Sigmoid colon (tissue), 7 donors: ENCODE measurements at regions of chr7 and their contacts with region 1.

Region 1: DNA sequence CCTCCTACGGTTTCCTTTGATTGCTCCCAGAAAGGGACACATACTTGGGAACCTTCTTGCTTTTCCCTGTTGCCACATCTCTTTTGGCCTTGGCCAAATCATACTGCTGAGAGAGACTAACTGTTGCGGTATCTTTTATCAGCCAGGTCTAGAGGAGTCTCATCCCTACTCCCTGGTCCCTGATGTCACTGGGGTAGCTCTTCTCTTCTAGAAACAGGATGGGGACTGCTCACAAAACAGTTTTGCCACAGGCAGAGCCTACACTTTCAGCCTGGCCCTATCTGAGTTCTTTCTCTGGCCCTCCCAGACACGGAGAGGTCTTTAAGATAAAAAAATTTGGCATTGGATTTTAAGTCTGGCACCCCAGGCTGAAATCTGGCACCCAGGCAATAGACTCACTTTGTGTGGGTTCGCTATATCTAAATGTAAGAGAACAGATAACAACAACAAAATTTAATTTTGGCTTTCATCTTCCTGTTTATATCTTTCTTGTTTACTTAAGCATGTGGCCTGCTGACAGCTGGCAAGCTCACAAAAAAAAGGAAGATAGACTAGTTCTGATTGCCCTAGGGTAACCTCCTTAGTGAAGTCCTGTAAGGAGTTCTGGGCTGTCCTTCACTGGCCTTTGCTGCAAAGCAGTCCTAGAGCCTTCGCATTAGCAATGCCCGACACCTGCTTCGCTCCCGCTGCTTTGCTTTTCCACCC is 228.3 kb upstream of the NPVF start:
- DNase-seq: peak; percentile 68
- H3K4me3 ChIP-seq: no peak overlapping the region
- H3K27ac ChIP-seq: peak overlapping the region in 3 of 4 donors; percentile 50 to 61 (median 56)
- H3K4me1 ChIP-seq: peaks cover 0 to 29% (median 15%) of the 10 kb centered on the region in 4 donors
- H3K27me3 ChIP-seq: no peaks in the 10 kb centered on the region
- CTCF ChIP-seq: no peak
- EP300 ChIP-seq: peak in 1 of 4 donors; percentile 9
- POLR2A ChIP-seq: no peak

Region 2: DNA sequence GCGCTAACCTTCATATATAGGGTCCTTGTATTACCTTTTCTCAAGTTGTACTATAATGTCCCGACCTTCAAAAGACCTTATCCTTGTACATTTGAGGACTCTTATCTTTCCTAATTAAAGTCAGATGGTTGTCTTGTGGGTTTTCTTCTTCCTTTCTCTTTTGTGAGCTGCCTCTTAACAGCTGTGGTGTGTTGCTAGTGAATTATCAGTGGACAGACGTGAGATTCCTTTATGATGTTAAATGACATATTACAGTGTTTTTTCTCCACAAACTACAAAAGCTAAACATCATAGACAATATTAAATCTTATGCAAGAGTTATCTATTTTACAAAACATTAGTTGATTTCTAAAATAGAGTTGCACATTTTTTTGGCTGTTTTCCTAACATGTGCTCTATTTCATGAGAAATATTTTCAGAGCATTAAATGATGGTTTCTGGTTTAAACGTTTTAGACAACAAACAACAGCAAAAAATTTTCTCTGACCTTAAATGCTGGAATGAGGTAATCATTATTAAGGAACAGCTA is 43.8 kb after region 1 on chr7:
- intact Hi-C with region 1: loop called (anchors 5 kb)
- DNase-seq: no peak
- H3K4me3 ChIP-seq: no peak overlapping the region
- H3K27ac ChIP-seq: no peak overlapping the region
- H3K4me1 ChIP-seq: peaks cover 0 to 11% (median 9%) of the 10 kb centered on the region in 4 donors
- H3K27me3 ChIP-seq: no peaks in the 10 kb centered on the region
- CTCF ChIP-seq: no peak
- EP300 ChIP-seq: no peak
- POLR2A ChIP-seq: no peak

Region 3: GRCh38 chr7:25928549-25929330 is 472.1 kb after region 1 on chr7:
- intact Hi-C with region 1: no loop called
- DNase-seq: no peak
- H3K4me3 ChIP-seq: no peak overlapping the region
- H3K27ac ChIP-seq: no peak overlapping the region
- H3K4me1 ChIP-seq: no peaks in the 10 kb centered on the region
- H3K27me3 ChIP-seq: no peaks in the 10 kb centered on the region
- CTCF ChIP-seq: no peak
- EP300 ChIP-seq: no peak
- POLR2A ChIP-seq: no peak